Activated CD4-positive, alpha-beta T cell treated with anti-CD3 and anti-CD28 coated beads for 36 hours (primary cell): ENCODE measurements at regions of chr11 and their contacts with region 1.

Region 1: GRCh38 chr11:61254403-61255025 is 13.5 kb downstream of the PGA5 start:
- DNase-seq: peak; percentile 84
- ATAC-seq: peak; percentile 97
- H3K4me3 Mint-ChIP-seq: no peak overlapping the region
- H3K27ac Mint-ChIP-seq: no peak overlapping the region
- H3K4me1 Mint-ChIP-seq: no peaks in the 10 kb centered on the region
- H3K27me3 Mint-ChIP-seq: no peaks in the 10 kb centered on the region

Region 2: DNA sequence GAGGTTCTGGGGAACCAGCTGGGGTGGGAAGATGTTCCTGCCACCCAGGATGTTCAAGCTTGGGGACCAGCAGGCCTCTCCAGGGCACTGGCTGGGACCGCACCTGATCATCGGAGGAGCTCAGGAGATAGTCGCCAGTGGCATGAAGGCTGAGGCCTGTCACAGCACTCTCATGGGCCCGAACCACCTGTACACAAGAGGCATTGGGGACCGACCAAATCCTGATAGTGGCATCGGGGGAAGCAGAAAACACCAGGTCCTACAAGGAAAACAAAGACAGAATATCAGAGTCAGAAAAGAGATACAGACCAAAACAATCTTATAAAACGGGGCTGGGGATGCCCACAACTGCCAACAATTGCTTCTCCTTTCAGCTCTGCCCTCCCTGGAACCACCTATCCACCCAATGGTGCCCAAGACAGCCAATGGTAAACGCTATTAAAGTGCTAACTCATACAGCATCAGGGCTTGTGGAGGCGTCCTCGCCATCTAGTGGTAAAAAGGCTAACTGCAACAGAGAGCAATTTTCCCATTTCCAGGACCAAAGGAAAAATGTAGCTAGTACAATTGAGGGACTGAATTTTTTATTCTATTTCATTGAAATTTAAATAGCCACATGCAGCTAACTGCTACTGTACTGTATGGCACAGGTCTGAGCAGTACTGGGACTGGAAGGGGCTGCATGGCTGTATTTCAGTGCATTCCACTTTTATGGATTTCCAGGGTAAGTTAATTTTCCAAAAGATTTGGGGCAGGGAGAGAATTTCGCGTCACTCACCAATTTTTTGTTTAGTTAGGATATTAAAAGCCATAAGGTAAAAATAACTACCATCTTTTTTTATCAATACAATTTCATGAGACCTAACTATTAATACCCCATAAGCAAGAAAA is 355.2 kb before region 1 on chr11:
- CTCF ChIA-PET with region 1: no interaction called
- POLR2A ChIA-PET with region 1: no interaction called
- intact Hi-C with region 1: no loop called
- DNase-seq: peak; percentile 32
- ATAC-seq: peak; percentile 87
- H3K4me3 Mint-ChIP-seq: no peak overlapping the region
- H3K27ac Mint-ChIP-seq: no peak overlapping the region
- H3K4me1 Mint-ChIP-seq: peaks cover 12% of the 10 kb centered on the region
- H3K27me3 Mint-ChIP-seq: no peaks in the 10 kb centered on the region

Region 3: DNA sequence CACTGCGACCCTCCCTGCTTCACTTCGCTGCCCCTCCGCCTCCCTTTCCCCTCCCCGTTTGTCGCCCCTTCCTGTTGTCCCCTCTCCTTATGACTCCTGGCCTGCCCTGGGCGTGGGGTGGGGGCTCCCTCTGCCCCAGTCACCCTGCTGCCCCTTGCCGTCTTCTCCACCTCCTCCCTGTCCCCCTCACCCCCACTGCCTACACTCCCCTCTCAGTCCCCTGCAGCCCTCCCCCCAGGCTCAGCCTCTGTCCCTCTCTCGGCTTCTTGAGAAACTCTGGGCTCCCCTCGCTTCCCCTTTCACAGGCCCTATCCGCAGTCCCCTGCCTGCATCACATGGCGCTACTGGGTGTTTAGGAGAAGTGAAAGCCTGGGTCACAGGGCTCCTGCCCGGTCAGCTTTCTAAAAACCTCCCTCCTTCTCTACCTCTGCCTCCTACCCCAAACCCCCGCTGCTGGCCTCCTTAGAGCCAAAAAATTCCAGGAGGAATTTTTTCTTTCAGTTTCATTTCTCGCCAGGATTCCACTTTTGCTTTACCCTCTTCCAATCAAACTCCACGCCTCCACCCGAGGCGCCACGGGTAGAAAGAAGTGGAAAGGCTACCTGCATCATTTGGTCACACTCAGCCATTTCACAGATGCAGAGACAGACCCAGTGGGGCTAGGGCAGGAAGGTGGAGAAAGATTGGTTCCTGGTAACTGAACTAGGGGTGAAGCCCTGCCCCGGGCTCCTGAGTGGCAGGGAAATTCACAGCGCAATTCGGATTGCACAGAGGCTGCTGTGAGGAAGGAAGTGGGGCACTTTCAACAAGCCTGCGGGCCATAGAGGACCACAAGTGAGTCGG is 302.4 kb before region 1 on chr11 and contains the start of gene SLC15A3:
- CTCF ChIA-PET with region 1: no interaction called
- POLR2A ChIA-PET with region 1: no interaction called
- intact Hi-C with region 1: loop called in 1 of 2 experiments (anchors 10 kb)
- DNase-seq: peak; percentile 52
- ATAC-seq: peak; percentile 71
- H3K4me3 Mint-ChIP-seq: peak within 1 kb of the TSS; percentile 75
- H3K27ac Mint-ChIP-seq: peak within 1 kb of the TSS; percentile 85
- H3K4me1 Mint-ChIP-seq: peaks cover 21% of the 10 kb centered on the region
- H3K27me3 Mint-ChIP-seq: peaks cover 7% of the 10 kb centered on the region
- total RNA-seq, gene SLC15A3: 7.0 to 9.6 TPM

Region 4: DNA sequence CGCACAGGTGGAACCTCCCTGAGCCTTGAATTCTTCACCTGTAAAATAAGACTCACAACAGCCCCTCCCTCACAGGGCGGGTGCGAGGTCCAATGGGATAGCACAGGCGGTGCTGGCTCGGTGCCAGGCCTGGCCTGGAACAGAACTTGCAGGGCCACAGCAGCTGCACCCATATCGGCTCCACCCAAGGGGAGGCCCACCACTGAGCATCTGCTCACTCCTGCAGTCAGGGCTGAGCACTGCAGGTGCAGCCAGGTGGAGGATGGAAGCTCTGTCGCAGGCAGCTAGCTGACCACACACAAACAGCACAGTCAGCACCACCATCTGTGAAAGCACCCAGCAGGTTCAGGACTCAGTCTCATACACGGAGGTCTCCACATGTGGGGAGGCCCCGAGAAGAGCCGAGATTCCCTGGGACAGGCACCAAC is 112.9 kb before region 1 on chr11:
- CTCF ChIA-PET with region 1: no interaction called
- POLR2A ChIA-PET with region 1: no interaction called
- intact Hi-C with region 1: no loop called
- DNase-seq: no peak
- ATAC-seq: peak; percentile 30
- H3K4me3 Mint-ChIP-seq: no peak overlapping the region
- H3K27ac Mint-ChIP-seq: no peak overlapping the region
- H3K4me1 Mint-ChIP-seq: peaks cover 14% of the 10 kb centered on the region
- H3K27me3 Mint-ChIP-seq: no peaks in the 10 kb centered on the region

Region 5: GRCh38 chr11:61294717-61295595 is 40.4 kb after region 1 on chr11 and contains the start of gene VWCE:
- CTCF ChIA-PET with region 1: interaction called, 6 read pairs
- POLR2A ChIA-PET with region 1: no interaction called
- intact Hi-C with region 1: loop called (anchors 1 kb)
- DNase-seq: peak; percentile 89
- ATAC-seq: peak; percentile 90
- H3K4me3 Mint-ChIP-seq: peak within 1 kb of the TSS; percentile 80
- H3K27ac Mint-ChIP-seq: peak within 1 kb of the TSS; percentile 72
- H3K4me1 Mint-ChIP-seq: peaks cover 33% of the 10 kb centered on the region
- H3K27me3 Mint-ChIP-seq: peaks cover 14% of the 10 kb centered on the region
- total RNA-seq, gene VWCE: 5.2 to 6.8 TPM

Region 6: GRCh38 chr11:61325649-61326414 is 71.3 kb after region 1 on chr11:
- CTCF ChIA-PET with region 1: no interaction called
- POLR2A ChIA-PET with region 1: no interaction called
- intact Hi-C with region 1: no loop called
- DNase-seq: no peak
- ATAC-seq: no peak
- H3K4me3 Mint-ChIP-seq: no peak overlapping the region
- H3K27ac Mint-ChIP-seq: no peak overlapping the region
- H3K4me1 Mint-ChIP-seq: peaks cover 27% of the 10 kb centered on the region
- H3K27me3 Mint-ChIP-seq: no peaks in the 10 kb centered on the region

Region 7: DNA sequence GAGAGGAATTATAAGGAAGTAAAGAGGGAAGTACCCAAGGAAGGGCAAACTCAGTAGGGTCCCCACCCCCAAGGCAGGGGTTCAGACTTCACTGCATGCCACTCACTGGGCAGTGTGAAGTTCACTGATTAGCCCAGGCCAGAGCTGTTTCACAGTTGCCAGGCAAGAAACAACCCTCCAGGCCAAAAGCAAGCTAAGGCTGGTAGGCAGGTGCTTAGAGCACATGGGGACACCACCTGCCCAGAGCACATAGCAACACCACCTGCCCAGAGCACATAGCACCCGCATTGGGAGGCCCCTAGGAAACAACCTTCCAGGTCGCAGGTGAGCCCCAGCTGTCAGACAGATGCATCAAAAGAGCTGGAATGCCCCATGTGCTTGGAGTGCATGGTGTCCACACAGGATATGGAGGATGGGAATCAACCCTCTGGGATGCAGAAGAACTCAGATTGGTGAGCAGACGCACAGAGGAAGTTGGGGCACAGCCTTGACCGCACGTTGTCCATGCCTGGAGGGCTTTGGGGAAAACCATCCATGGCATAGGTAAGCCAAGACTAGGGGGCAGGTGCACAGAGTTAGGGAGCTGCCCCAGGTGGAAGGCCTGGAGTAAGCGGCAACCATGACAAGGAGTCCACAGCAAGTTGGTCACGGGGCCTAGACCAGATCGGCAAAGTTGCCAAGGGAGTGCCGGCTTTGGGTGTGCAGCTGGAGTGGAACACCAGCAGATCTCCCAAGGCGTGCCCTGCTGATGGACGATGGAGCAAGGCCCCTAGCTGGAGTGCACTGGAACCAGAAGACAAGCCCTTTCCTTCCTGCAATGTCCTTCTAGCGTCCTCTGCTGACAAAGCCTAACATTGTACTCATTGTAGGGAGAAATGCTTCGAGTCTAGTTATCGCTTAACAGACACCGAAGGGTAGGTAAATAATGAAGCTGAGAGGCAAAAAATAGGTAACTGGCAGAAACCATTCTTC is 130.0 kb after region 1 on chr11:
- CTCF ChIA-PET with region 1: interaction called, 47 read pairs
- POLR2A ChIA-PET with region 1: no interaction called
- intact Hi-C with region 1: loop called (anchors 1 kb)
- DNase-seq: no peak
- ATAC-seq: no peak
- H3K4me3 Mint-ChIP-seq: no peak overlapping the region
- H3K27ac Mint-ChIP-seq: no peak overlapping the region
- H3K4me1 Mint-ChIP-seq: peaks cover 3% of the 10 kb centered on the region
- H3K27me3 Mint-ChIP-seq: no peaks in the 10 kb centered on the region